GM12878 (cell line): ENCODE measurements at regions of chr6 and their contacts with region 1.

Region 1: GRCh38 chr6:163554663-163555062 is 140.1 kb downstream of the QKI start:
- DNase-seq: no peak
- ATAC-seq: peak; percentile 84
- H3K4me3 ChIP-seq: no peak overlapping the region
- H3K27ac ChIP-seq: no peak overlapping the region
- H3K4me1 ChIP-seq: no peaks in the 10 kb centered on the region; the same call in 1 of the 2 replicates
- H3K27me3 ChIP-seq: no peaks in the 10 kb centered on the region
- CTCF ChIP-seq: peak; percentile 49 to 55 (median 51); a peak in 5 of 6 replicates
- EP300 ChIP-seq: no peak
- POLR2A ChIP-seq: no peak
- RAD21 ChIP-seq: peak; percentile 66

Region 2: DNA sequence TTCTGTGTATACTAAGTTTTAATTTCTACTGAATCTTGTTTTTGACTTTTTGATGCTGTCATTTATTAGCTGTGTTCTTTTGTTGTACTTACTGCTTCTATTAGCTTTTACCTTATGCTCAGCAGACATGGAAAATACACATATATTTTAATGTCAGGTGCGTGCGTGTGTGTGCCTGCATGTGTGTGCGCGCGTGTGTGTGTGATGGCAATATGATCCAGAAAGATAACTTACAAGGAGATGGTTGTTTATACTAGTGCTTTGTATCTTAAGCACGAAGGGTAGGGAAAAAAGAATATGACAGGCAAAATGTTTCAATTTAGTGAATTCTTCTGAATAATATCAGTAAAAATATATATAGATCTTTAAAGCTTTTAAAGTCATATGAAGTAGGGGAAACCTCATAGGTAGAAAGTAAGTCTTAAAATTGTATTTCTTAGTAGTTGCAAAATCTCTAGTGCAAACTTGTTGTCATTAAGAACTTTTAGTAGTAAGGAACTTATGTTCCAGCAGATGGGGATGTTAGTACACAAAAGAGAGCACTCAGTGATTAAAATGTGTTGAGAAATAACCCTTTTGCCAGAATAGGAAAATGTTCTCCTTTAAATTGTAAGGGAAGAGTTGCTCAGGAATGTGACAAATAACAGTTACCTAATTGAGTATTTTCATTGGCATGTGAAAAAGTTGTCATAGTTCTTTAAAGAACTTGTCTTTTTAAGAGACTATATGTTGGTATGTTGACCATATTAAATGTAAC is 127.0 kb before region 1 on chr6:
- CTCF ChIA-PET with region 1: interaction called, 13 read pairs
- POLR2A ChIA-PET with region 1: interaction called, 3 read pairs
- RAD21 ChIA-PET with region 1: interaction called, 13 read pairs
- SMC1A ChIA-PET with region 1: interaction called, 7 read pairs
- in situ Hi-C with region 1: no loop called
- intact Hi-C with region 1: no loop called
- DNase-seq: no peak
- ATAC-seq: peak; percentile 45; the same call in 2 of the 3 replicates
- H3K4me3 ChIP-seq: no peak overlapping the region
- H3K27ac ChIP-seq: no peak overlapping the region
- H3K4me1 ChIP-seq: no peaks in the 10 kb centered on the region
- H3K27me3 ChIP-seq: no peaks in the 10 kb centered on the region
- CTCF ChIP-seq: peak in 1 of 3 experiments; percentile 52; a peak in 2 of 6 replicates
- EP300 ChIP-seq: no peak
- POLR2A ChIP-seq: no peak
- RAD21 ChIP-seq: peak; percentile 76